ENCODE measurements at regions of chr18 and their contacts with region 1.

Region 1: DNA sequence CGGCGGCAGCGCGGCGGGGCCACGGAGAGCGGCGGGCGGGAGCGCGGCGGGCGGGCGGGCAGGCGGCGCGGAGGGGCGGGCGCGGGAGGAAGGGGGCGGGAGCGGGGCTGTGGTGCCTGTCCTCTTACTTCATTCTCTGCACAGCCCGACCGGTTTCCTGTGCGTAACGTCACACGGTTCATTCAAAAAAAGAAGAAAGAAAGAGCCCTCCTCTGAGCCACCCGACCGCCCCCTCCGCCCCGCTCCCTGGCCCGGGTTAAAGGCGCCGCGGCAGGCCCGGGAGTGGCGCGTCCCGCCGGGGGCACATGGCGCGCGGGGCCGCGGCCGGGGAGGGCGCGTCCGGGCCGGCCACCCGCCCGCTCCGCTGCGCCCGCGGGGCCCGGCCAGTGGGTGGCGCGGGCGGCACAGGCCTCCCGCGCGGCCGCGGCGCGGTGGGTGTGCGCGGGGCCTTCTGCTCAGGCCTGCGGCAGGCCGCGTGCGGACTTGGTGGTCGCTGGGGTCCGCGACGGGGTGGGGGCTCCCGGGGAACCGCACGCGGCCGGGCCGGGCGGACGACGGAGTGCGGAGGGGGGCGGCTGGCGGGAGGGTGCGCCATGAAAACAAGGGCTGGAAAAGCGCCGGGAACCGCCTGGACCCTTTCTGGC is 599 bp upstream of the BCL2 start:
- DNase-seq: peak; percentile 87
- H3K4me3 Mint-ChIP-seq: peak overlapping the region; percentile 92
- H3K27ac Mint-ChIP-seq: peak overlapping the region; percentile 67
- H3K4me1 Mint-ChIP-seq: peaks cover 26% of the 10 kb centered on the region
- H3K27me3 Mint-ChIP-seq: no peaks in the 10 kb centered on the region

Region 2: GRCh38 chr18:63016270-63016669 is 303.9 kb before region 1 on chr18:
- CTCF ChIA-PET with region 1: interaction called, 74 read pairs
- POLR2A ChIA-PET with region 1: interaction called, 12 read pairs
- DNase-seq: peak; percentile 53
- H3K4me3 Mint-ChIP-seq: no peak overlapping the region
- H3K27ac Mint-ChIP-seq: no peak overlapping the region
- H3K4me1 Mint-ChIP-seq: no peaks in the 10 kb centered on the region
- H3K27me3 Mint-ChIP-seq: peaks cover 50% of the 10 kb centered on the region

Region 3: GRCh38 chr18:63138436-63139340 is 181.5 kb before region 1 on chr18:
- CTCF ChIA-PET with region 1: interaction called, 23 read pairs
- POLR2A ChIA-PET with region 1: interaction called, 16 read pairs
- DNase-seq: no peak
- H3K4me3 Mint-ChIP-seq: peak overlapping the region; percentile 72
- H3K27ac Mint-ChIP-seq: peak overlapping the region; percentile 86
- H3K4me1 Mint-ChIP-seq: peaks cover 68% of the 10 kb centered on the region
- H3K27me3 Mint-ChIP-seq: no peaks in the 10 kb centered on the region

Region 4: GRCh38 chr18:63186520-63187222 is 133.5 kb before region 1 on chr18:
- CTCF ChIA-PET with region 1: interaction called, 10 read pairs
- POLR2A ChIA-PET with region 1: interaction called, 4 read pairs
- DNase-seq: no peak
- H3K4me3 Mint-ChIP-seq: no peak overlapping the region
- H3K27ac Mint-ChIP-seq: no peak overlapping the region
- H3K4me1 Mint-ChIP-seq: peaks cover 72% of the 10 kb centered on the region
- H3K27me3 Mint-ChIP-seq: no peaks in the 10 kb centered on the region

Region 5: GRCh38 chr18:63216516-63217311 is 103.5 kb before region 1 on chr18:
- CTCF ChIA-PET with region 1: interaction called, 30 read pairs
- POLR2A ChIA-PET with region 1: interaction called, 42 read pairs
- DNase-seq: peak; percentile 49
- H3K4me3 Mint-ChIP-seq: peak overlapping the region; percentile 64
- H3K27ac Mint-ChIP-seq: peak overlapping the region; percentile 93
- H3K4me1 Mint-ChIP-seq: peaks cover 95% of the 10 kb centered on the region
- H3K27me3 Mint-ChIP-seq: no peaks in the 10 kb centered on the region

Region 6: GRCh38 chr18:63253428-63254372 is 66.5 kb before region 1 on chr18:
- CTCF ChIA-PET with region 1: interaction called, 7 read pairs
- POLR2A ChIA-PET with region 1: interaction called, 14 read pairs
- DNase-seq: no peak
- H3K4me3 Mint-ChIP-seq: no peak overlapping the region
- H3K27ac Mint-ChIP-seq: peak overlapping the region; percentile 72
- H3K4me1 Mint-ChIP-seq: peaks cover 76% of the 10 kb centered on the region
- H3K27me3 Mint-ChIP-seq: no peaks in the 10 kb centered on the region

Region 7: DNA sequence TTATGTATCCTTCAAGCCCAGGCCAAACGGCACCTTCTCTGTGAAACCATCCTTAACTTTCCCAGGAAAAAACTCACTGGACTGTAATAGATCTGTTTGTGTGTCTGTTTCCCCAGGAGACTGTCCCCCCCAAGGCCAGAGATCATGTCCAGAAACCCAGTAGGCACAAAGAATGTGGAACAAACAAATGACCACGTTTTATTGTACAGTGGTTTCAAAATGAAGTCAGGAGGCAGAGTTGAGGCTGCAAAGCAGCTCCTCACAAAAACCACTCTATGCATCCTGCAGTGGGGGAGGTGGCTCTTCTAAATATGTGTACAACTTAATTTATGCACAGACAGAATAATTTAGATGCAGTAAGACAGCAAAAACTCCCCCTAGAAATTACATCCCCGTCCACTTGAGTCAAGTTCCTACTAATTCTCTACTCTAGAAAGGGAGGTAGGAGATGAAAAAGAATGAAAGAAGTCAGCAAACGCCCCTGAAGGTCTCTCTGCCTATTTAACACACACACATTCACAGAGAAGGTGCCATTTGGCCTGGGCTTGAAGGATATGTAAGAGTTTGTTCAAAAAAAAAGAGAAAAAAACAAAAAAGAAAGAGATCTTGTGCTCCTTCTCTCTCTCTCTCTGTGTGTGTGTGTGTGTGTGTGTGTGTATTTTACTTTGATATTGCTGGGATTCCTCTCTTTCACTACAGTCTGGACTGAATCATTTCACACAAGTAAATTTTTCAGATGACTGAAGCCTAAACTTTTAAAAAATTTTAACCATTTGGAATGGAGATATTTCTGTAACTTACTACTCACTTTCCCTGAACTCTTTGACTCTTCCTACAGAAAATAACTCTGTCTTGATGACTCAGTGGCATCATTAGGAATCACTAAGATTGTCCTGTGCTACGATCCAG is 20.1 kb before region 1 on chr18:
- CTCF ChIA-PET with region 1: interaction called, 58 read pairs
- POLR2A ChIA-PET with region 1: interaction called, 112 read pairs
- DNase-seq: peak; percentile 64
- H3K4me3 Mint-ChIP-seq: peak overlapping the region; percentile 53
- H3K27ac Mint-ChIP-seq: peak overlapping the region; percentile 83
- H3K4me1 Mint-ChIP-seq: peaks cover 85% of the 10 kb centered on the region
- H3K27me3 Mint-ChIP-seq: no peaks in the 10 kb centered on the region

Measured in activated CD4-positive, alpha-beta memory T cell treated with anti-CD3 and anti-CD28 coated beads, Interleukin-2, amount 10 ng/mL, durations not matched to agents 7 days and 5 days (primary cell).